WTC11 (cell line): ENCODE measurements at regions of chr2 and their contacts with region 1.

Region 1: DNA sequence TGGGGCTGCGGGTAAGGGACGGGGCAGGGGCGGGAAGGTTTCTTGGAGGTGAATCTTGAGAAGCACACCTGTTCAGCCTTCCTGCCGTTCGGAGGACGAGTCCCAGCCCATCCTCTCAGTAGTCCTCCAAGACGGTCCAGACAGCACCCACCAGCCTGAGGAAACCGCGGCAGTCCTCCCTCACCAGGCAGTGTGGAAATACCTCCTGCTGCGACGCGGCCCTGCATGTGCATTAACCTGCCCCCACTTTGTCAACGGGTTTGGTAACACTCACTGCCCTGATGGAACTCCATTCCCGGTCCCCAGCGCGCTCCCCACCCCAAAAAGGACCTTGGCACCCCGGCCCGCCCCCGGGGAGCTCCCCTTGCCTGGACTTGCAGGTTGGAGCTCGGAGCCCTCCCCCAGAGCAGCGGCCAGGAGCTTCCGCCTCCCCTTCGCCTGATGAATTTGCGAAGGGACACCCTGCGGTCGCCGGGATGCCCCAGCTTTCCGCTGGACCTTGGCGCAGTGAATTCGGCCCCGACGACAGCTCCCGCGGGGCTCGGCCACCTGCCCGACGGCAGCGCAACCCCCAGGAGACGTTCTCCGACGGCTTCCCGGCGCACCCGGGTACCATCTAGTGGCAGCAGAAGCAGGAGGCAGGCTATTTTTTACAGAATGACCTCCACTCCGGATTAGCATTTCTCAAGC is 31.5 kb downstream of the ACVR1C start:
- DNase-seq: peak; percentile 86
- ATAC-seq: peak; percentile 94
- H3K4me3 Mint-ChIP-seq: peak overlapping the region; percentile 54
- H3K27ac Mint-ChIP-seq: no peak overlapping the region
- H3K4me1 Mint-ChIP-seq: peaks cover 4% of the 10 kb centered on the region
- H3K27me3 Mint-ChIP-seq: peaks cover 36% of the 10 kb centered on the region
- CTCF ChIP-seq: peak; percentile 47; the same call in 1 of the 2 replicates

Region 2: GRCh38 chr2:157492189-157492773 is 104.9 kb before region 1 on chr2:
- CTCF ChIA-PET with region 1: interaction called, 10 read pairs
- POLR2A ChIA-PET with region 1: no interaction called
- DNase-seq: peak; percentile 74
- ATAC-seq: peak; percentile 94
- H3K4me3 Mint-ChIP-seq: no peak overlapping the region
- H3K27ac Mint-ChIP-seq: no peak overlapping the region
- H3K4me1 Mint-ChIP-seq: 0 out of 2 replicates have a peak, but pooled peaks cover 4% of the 10 kb centered on the region
- H3K27me3 Mint-ChIP-seq: no peaks in the 10 kb centered on the region
- CTCF ChIP-seq: peak; percentile 62; the same call in 1 of the 2 replicates

Region 3: DNA sequence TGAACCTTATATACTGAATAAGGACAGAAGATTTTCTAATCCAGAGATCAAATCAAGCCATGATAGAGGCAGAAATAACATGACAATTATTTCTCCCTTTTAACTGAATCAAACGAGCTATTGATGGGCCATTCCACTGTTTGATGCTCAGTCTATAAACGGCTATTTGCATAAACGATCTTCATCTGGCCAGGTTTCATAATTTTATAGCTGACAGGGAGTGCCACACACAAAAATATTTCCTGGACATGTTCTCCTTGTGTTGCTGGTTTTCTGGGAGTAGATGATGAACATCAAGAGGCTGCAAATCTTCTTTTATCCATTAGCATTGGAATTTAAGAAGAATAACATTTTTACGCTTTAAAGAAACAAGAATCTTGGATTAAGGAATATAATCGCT is 31.6 kb before region 1 on chr2:
- CTCF ChIA-PET with region 1: no interaction called
- POLR2A ChIA-PET with region 1: no interaction called
- DNase-seq: no peak
- ATAC-seq: no peak
- H3K4me3 Mint-ChIP-seq: no peak overlapping the region
- H3K27ac Mint-ChIP-seq: no peak overlapping the region
- H3K4me1 Mint-ChIP-seq: peaks cover 14% of the 10 kb centered on the region
- H3K27me3 Mint-ChIP-seq: peaks cover 2% of the 10 kb centered on the region; the same call in 1 of the 2 replicates
- CTCF ChIP-seq: no peak